CD14-positive monocyte (primary cell): ENCODE measurements at regions of chr9 and their contacts with region 1.

Region 1: GRCh38 chr9:84315278-84315877 is 25.2 kb downstream of the SLC28A3 start:
- DNase-seq: peak; percentile 51 to 63 (median 57)
- H3K4me3 ChIP-seq: peak overlapping the region in 1 of 3 experiments; percentile 19
- H3K4me3 Mint-ChIP-seq: peak overlapping the region in 1 of 2 donors; percentile 29
- H3K27ac ChIP-seq: no peak overlapping the region
- H3K27ac Mint-ChIP-seq: no peak overlapping the region
- H3K4me1 ChIP-seq: peaks cover 7 to 9% of the 10 kb centered on the region in 2 donors
- H3K4me1 Mint-ChIP-seq: peaks cover 18% of the 10 kb centered on the region
- H3K27me3 ChIP-seq: no peaks in the 10 kb centered on the region
- H3K27me3 Mint-ChIP-seq: no peaks in the 10 kb centered on the region
- CTCF ChIP-seq: peak; percentile 86

Region 2: GRCh38 chr9:84261082-84261746 is 54.2 kb before region 1 on chr9:
- intact Hi-C with region 1: loop called in 1 of 2 experiments (anchors 2 kb)
- DNase-seq: peak; percentile 53 to 68 (median 66)
- H3K4me3 ChIP-seq: no peak overlapping the region
- H3K4me3 Mint-ChIP-seq: peak overlapping the region; percentile 46 to 71
- H3K27ac ChIP-seq: no peak overlapping the region
- H3K27ac Mint-ChIP-seq: no peak overlapping the region
- H3K4me1 ChIP-seq: peaks cover 4 to 5% of the 10 kb centered on the region in 2 donors
- H3K4me1 Mint-ChIP-seq: peaks cover 7% of the 10 kb centered on the region
- H3K27me3 ChIP-seq: peaks cover 2 to 3% of the 10 kb centered on the region in 2 donors
- H3K27me3 Mint-ChIP-seq: peaks cover 0 to 4% (median 2%) of the 10 kb centered on the region in 3 donors
- CTCF ChIP-seq: peak; percentile 91

Region 3: GRCh38 chr9:84371737-84372136 is 56.4 kb after region 1 on chr9:
- intact Hi-C with region 1: no loop called
- DNase-seq: peak; percentile 80 to 87 (median 84)
- H3K4me3 ChIP-seq: peak overlapping the region in 1 of 3 experiments; percentile 32
- H3K4me3 Mint-ChIP-seq: peak overlapping the region; percentile 55 to 72
- H3K27ac ChIP-seq: peak overlapping the region; percentile 77 to 82
- H3K27ac Mint-ChIP-seq: peak overlapping the region; percentile 80 to 94 (median 90)
- H3K4me1 ChIP-seq: peaks cover 70 to 79% of the 10 kb centered on the region in 2 donors
- H3K4me1 Mint-ChIP-seq: peaks cover 77% of the 10 kb centered on the region
- H3K27me3 ChIP-seq: no peaks in the 10 kb centered on the region
- H3K27me3 Mint-ChIP-seq: peaks cover 0 to 5% (median 0%) of the 10 kb centered on the region in 3 donors
- CTCF ChIP-seq: no peak